ENCODE measurements at regions of chr1 and their contacts with region 1.

Region 1: GRCh38 chr1:202810615-202811295 is at the start of gene PCAT6:
- DNase-seq: peak; percentile 92 to 96
- ATAC-seq: peak; percentile 93 to 97 (median 95)
- H3K4me3 ChIP-seq: peak within 1 kb of the TSS; percentile 48 to 86 (median 76)
- H3K27ac ChIP-seq: peak within 1 kb of the TSS; percentile 11 to 93 (median 81)
- H3K4me1 ChIP-seq: peaks cover 4 to 42% (median 31%) of the 10 kb centered on the region in 9 donors
- H3K27me3 ChIP-seq: no peaks in the 10 kb centered on the region
- CTCF ChIP-seq: no peak
- total RNA-seq, gene PCAT6: 0.41 to 1.3 (median 0.81) TPM in 9 of 10 donors, not detected in the other

Region 2: GRCh38 chr1:202858331-202858730 is 47.6 kb after region 1 on chr1:
- intact Hi-C with region 1: loop called in 1 of 10 experiments (anchors 5 kb)
- DNase-seq: peak; percentile 47 to 51
- ATAC-seq: peak; percentile 29 to 79 (median 48)
- H3K4me3 ChIP-seq: no peak overlapping the region
- H3K27ac ChIP-seq: peak overlapping the region in 9 of 10 donors; percentile 15 to 79 (median 60)
- H3K4me1 ChIP-seq: peaks cover 4 to 30% (median 15%) of the 10 kb centered on the region in 9 donors
- H3K27me3 ChIP-seq: peaks cover 0 to 20% (median 0%) of the 10 kb centered on the region in 7 donors
- CTCF ChIP-seq: no peak

Region 3: GRCh38 chr1:202888531-202889360 is 78.0 kb after region 1 on chr1 and contains the start of gene RABIF:
- intact Hi-C with region 1: loop called in 3 of 10 experiments (anchors 2 to 5 kb)
- DNase-seq: peak; percentile 96 to 97
- ATAC-seq: peak; percentile 98 to 99 (median 99)
- H3K4me3 ChIP-seq: peak within 1 kb of the TSS; percentile 59 to 88 (median 74)
- H3K27ac ChIP-seq: peak within 1 kb of the TSS; percentile 70 to 98 (median 95)
- H3K4me1 ChIP-seq: peaks cover 0 to 18% (median 13%) of the 10 kb centered on the region in 9 donors
- H3K27me3 ChIP-seq: no peaks in the 10 kb centered on the region
- CTCF ChIP-seq: peak in 6 of 9 donors; percentile 10 to 59 (median 37)
- total RNA-seq, gene RABIF: 3.2 to 6.0 (median 4.8) TPM

Region 4: GRCh38 chr1:203839059-203839458 is 1028.3 kb after region 1 on chr1:
- intact Hi-C with region 1: loop called in 1 of 10 experiments (anchors 10 kb)
- DNase-seq: no peak
- ATAC-seq: peak in 2 of 8 donors; percentile 61 to 68
- H3K4me3 ChIP-seq: no peak overlapping the region
- H3K27ac ChIP-seq: no peak overlapping the region
- H3K4me1 ChIP-seq: peaks cover 0 to 14% (median 4%) of the 10 kb centered on the region in 9 donors
- H3K27me3 ChIP-seq: no peaks in the 10 kb centered on the region
- CTCF ChIP-seq: no peak

Measured in heart right ventricle (tissue), 16 donors.